Transverse colon (tissue), 4 donors: ENCODE measurements at regions of chr16 and their contacts with region 1.

Region 1: GRCh38 chr16:18979936-18980335 is 3.8 kb upstream of the TMC7 start:
- DNase-seq: no peak
- H3K4me3 ChIP-seq: no peak overlapping the region
- H3K27ac ChIP-seq: no peak overlapping the region
- H3K4me1 ChIP-seq: peaks cover 0 to 6% (median 3%) of the 10 kb centered on the region in 4 donors
- H3K27me3 ChIP-seq: peaks cover 7% of the 10 kb centered on the region
- CTCF ChIP-seq: no peak
- EP300 ChIP-seq: no peak
- POLR2A ChIP-seq: no peak

Region 2: GRCh38 chr16:19071811-19072777 is 92.2 kb after region 1 on chr16:
- in situ Hi-C with region 1: loop called in 1 of 4 experiments (anchors 10 kb)
- intact Hi-C with region 1: no loop called
- DNase-seq: peak; percentile 77
- H3K4me3 ChIP-seq: no peak overlapping the region
- H3K27ac ChIP-seq: no peak overlapping the region
- H3K4me1 ChIP-seq: peaks cover 4 to 11% (median 10%) of the 10 kb centered on the region in 4 donors
- H3K27me3 ChIP-seq: no peaks in the 10 kb centered on the region
- CTCF ChIP-seq: peak; percentile 62 to 78 (median 72)
- EP300 ChIP-seq: no peak
- POLR2A ChIP-seq: no peak